ENCODE measurements at regions of chr10 and their contacts with region 1.

Region 1: GRCh38 chr10:122021379-122021778 is 32.4 kb downstream of the TACC2 start:
- DNase-seq: peak in 1 of 2 donors; percentile 79
- H3K4me3 ChIP-seq: no peak overlapping the region
- CTCF ChIP-seq: no peak
- POLR2A ChIP-seq: no peak

Region 2: GRCh38 chr10:121974535-121975294 is 46.7 kb before region 1 on chr10 and contains the start of gene NSMCE4A:
- intact Hi-C with region 1: loop called (anchors 10 kb)
- DNase-seq: peak; percentile 53 to 94
- H3K4me3 ChIP-seq: peak within 1 kb of the TSS; percentile 77
- CTCF ChIP-seq: no peak
- POLR2A ChIP-seq: no peak
- total RNA-seq, gene NSMCE4A: 51.1 to 77.0 (median 56.1) TPM

Region 3: GRCh38 chr10:122232769-122233168 is 211.4 kb after region 1 on chr10:
- intact Hi-C with region 1: no loop called
- DNase-seq: no peak
- H3K4me3 ChIP-seq: no peak overlapping the region
- CTCF ChIP-seq: no peak
- POLR2A ChIP-seq: no peak